ENCODE measurements at regions of chr11 and their contacts with region 1.

Region 1: GRCh38 chr11:82867495-82868082 is 32.6 kb downstream of the PRCP start:
- DNase-seq: peak; percentile 87
- H3K4me3 ChIP-seq: no peak overlapping the region
- H3K27ac ChIP-seq: no peak overlapping the region
- H3K4me1 ChIP-seq: peaks cover 15% of the 10 kb centered on the region
- H3K27me3 ChIP-seq: no peaks in the 10 kb centered on the region
- CTCF ChIP-seq: peak; percentile 43 to 44
- POLR2A ChIP-seq: no peak

Region 2: DNA sequence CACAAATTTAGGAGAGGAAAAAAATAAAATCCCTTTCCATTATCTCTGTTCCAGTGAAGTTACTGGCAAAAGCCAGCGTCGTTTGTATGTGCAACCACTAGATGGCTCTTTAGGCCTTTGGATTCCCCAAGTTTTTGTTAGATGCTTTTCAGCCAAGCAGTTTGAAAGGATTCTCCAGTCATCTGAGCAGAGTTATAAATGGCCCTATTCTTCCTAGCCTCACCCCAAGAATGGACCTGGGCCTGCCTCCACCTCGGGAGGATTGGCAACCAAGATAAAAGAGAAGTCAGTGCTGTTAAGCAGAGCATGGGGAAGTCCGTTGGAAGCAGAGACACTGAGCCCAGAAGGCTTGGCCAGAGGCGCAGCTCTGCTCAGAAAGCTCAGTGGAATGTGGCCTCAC is 149.3 kb before region 1 on chr11:
- CTCF ChIA-PET with region 1: interaction called, 36 read pairs
- POLR2A ChIA-PET with region 1: no interaction called
- dilution Hi-C with region 1: no loop called
- intact Hi-C with region 1: loop called (anchors 1 kb)
- DNase-seq: peak; percentile 34
- H3K4me3 ChIP-seq: no peak overlapping the region
- H3K27ac ChIP-seq: no peak overlapping the region
- H3K4me1 ChIP-seq: no peaks in the 10 kb centered on the region
- H3K27me3 ChIP-seq: peaks cover 10 to 13% of the 10 kb centered on the region in 2 experiments
- CTCF ChIP-seq: peak; percentile 61 to 72
- POLR2A ChIP-seq: no peak

Region 3: DNA sequence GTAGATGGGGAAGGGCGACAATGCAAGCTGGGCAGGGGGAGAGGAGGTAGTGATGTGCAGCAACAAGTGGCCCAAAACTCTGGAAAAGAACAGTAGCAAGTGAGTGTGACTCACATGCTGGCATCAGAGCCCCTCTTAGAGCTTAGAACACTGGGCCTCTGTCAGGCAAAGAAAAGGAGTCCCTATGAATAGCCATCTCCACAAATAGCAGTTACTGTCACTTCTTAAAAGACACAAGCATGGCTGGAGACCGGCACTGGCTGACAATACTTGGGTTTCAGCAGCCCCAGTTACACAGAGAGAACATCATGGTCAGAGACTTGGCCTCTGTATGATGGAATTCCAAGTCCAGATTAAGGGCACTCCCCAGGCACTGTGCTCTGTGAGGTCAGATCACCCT is 25.6 kb before region 1 on chr11:
- CTCF ChIA-PET with region 1: interaction called, 10 read pairs
- POLR2A ChIA-PET with region 1: no interaction called
- dilution Hi-C with region 1: no loop called
- intact Hi-C with region 1: no loop called
- DNase-seq: no peak
- H3K4me3 ChIP-seq: no peak overlapping the region
- H3K27ac ChIP-seq: no peak overlapping the region
- H3K4me1 ChIP-seq: no peaks in the 10 kb centered on the region
- H3K27me3 ChIP-seq: no peaks in the 10 kb centered on the region
- CTCF ChIP-seq: no peak
- POLR2A ChIP-seq: no peak

Region 4: DNA sequence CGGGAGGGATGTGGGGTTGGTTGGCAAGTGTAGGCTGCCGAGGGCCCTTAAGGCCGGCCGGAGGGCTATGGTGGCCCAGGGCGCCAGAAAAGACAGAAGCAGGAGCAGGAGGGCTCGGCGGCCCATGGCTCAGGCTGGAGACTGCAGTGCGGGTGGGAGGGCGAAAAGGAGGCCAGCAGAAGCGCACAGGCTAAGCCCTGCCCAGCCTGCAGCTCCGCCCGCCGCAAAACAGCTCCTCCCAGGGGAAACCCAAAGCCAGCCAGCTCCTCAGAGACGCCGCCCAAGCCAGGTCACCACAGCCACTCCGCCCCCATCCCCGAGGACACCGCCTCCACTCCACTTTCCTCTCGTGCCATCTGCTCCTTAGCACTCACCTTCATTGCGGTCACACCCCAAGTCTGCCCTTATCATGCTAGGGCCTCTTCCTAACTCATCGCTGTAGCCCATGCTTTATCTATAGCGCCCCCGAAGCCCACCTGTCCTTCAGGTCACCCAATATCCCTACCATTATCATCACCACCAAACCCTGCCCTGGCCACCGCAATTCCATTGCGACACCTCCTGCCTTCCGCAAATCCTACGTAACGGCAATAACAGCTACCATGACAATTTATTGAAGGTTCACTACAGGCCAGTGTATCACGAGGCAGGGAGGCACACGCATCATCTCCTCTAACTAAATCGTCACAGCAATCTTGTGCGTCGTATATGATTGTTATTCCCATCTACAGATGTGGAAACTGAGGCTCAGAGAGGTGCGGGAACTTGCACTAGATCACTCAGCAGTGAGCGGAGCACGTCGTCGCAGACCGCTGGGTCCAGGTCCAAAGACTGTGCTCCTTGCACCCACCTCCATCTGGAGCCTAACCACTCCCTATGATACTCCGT is 32.9 kb after region 1 on chr11 and contains the start of gene PRCP:
- CTCF ChIA-PET with region 1: interaction called, 191 read pairs
- POLR2A ChIA-PET with region 1: interaction called, 8 read pairs
- dilution Hi-C with region 1: no loop called
- intact Hi-C with region 1: loop called (anchors 1 kb)
- DNase-seq: peak; percentile 91
- H3K4me3 ChIP-seq: peak within 1 kb of the TSS; percentile 34 to 75 (median 50)
- H3K27ac ChIP-seq: peak within 1 kb of the TSS; percentile 52
- H3K4me1 ChIP-seq: peaks cover 32% of the 10 kb centered on the region
- H3K27me3 ChIP-seq: no peaks in the 10 kb centered on the region
- CTCF ChIP-seq: no peak
- POLR2A ChIP-seq: peak; percentile 96
- total RNA-seq, gene PRCP: 149 and 170 TPM in 2 replicates

Region 5: GRCh38 chr11:83071567-83072349 is 204.2 kb after region 1 on chr11 and contains the start of gene RAB30:
- CTCF ChIA-PET with region 1: interaction called, 9 read pairs
- POLR2A ChIA-PET with region 1: no interaction called
- dilution Hi-C with region 1: no loop called
- intact Hi-C with region 1: loop called (anchors 5 kb)
- DNase-seq: peak; percentile 100
- H3K4me3 ChIP-seq: peak within 1 kb of the TSS; percentile 78 to 96 (median 93)
- H3K27ac ChIP-seq: peak within 1 kb of the TSS; percentile 75
- H3K4me1 ChIP-seq: peaks cover 36% of the 10 kb centered on the region
- H3K27me3 ChIP-seq: no peaks in the 10 kb centered on the region
- CTCF ChIP-seq: no peak
- POLR2A ChIP-seq: peak; percentile 97
- total RNA-seq, gene RAB30: 14.6 and 18.4 TPM in 2 replicates

Region 6: DNA sequence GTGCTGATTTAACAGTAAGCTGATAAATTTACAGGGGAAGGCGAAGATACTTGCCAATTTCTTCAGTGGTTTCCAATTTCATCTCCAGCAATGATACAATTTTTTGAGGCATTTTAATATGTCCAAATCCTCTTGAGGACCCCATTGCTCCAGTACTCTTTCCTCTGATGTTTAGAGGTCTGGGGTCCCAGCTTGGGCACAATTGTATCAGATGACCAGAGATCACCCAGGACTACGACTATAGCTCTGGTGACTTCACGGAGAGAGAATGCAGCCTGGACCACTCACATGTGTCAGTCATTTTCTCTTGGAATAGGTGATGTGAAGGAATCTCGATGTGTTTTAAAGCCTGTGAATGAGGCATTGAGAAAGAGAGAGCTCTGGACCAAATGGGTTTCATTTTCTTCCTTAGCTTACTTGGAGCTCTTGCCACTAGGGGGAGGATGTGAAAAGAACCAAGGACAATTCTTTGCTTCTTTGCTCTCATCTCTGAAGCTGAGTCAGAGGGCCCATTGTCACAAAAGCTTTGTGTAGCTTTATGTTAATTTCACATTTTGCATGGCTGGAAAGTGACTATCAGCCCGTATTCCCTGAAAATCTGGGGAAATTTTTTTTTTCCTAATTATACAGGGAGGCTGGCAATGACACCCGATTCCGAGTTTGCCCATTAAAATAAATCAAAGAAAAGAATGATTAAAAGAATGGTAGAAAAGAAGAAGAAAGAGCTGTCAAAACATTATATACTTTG is 425.3 kb after region 1 on chr11:
- CTCF ChIA-PET with region 1: interaction called, 10 read pairs
- POLR2A ChIA-PET with region 1: no interaction called
- dilution Hi-C with region 1: no loop called
- intact Hi-C with region 1: no loop called
- DNase-seq: peak; percentile 46
- H3K4me3 ChIP-seq: no peak overlapping the region
- H3K27ac ChIP-seq: no peak overlapping the region
- H3K4me1 ChIP-seq: no peaks in the 10 kb centered on the region
- H3K27me3 ChIP-seq: peaks cover 4 to 9% of the 10 kb centered on the region in 2 experiments
- CTCF ChIP-seq: peak; percentile 57 to 70
- POLR2A ChIP-seq: no peak

Measured in endothelial cell of umbilical vein (primary cell).